Body of pancreas (tissue), 4 donors: ENCODE measurements at regions of chr16 and their contacts with region 1.

Region 1: DNA sequence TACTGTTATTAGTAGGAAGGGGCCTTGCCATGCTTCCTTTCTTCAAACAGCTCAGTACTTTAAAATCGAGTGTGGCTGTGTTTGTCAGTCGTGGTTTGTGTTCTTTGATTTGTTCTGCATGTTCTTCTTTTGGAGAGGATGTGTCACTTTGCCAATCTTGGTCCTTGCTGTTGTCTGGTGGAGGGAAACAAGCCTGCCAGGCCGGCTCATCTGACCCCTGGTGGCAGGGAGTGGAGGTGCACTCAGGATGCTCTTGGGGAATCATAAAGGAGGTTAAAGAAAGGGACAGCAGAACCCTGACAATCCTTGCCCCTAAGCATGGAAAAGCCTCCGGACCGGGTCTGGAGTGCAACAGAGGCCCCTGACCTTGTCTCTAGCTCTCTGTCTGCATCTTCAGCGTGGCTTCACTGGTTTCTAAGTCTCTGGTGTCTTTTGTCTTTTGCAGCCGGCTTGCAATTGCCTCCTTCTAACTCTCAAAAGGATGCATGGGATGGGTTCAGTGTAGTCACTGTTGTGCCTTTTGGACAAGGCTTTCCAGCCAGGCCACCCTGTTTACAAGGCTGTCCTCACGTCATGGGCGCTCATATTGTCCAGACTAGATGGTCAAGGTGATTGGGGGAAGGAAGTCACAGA is 135.8 kb downstream of the WWOX start:
- DNase-seq: peak; percentile 59 to 70 (median 66)
- ATAC-seq: peak; percentile 65
- H3K4me3 ChIP-seq: no peak overlapping the region
- H3K27ac ChIP-seq: no peak overlapping the region
- H3K4me1 ChIP-seq: peaks cover 7% of the 10 kb centered on the region
- H3K27me3 ChIP-seq: no peaks in the 10 kb centered on the region
- CTCF ChIP-seq: peak; percentile 71 to 94 (median 84)
- POLR2A ChIP-seq: no peak

Region 2: DNA sequence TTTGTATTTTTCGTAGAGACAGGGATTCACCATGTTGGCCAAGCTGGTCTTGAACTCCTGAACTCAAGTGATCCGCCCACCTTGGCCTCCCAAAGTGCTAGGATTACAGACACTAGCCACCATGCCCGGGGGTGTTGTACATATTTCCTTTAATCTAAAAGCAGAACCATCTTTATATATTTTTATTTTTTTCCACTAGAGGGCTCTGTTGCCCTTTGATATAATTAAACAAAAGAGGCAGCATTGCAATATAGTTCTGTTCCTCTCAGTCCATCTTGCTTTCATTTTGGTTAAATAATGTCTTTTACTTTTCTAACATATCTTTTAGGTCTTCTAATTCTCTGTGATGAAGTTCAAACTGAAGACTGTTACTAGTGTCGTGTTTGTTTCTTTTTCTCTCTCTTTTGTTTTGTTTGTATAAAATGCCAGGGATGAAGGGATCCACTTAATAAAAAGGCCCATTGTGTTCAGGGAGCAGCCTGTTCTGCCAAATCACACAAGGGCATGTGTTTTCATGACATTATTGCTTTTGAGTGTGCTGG is 112.4 kb before region 1 on chr16:
- intact Hi-C with region 1: loop called (anchors 10 kb)
- DNase-seq: peak in 2 of 4 donors; percentile 22 to 24
- ATAC-seq: peak; percentile 76
- H3K4me3 ChIP-seq: no peak overlapping the region
- H3K27ac ChIP-seq: peak overlapping the region in 3 of 4 donors; percentile 20 to 70 (median 32)
- H3K4me1 ChIP-seq: no peaks in the 10 kb centered on the region
- H3K27me3 ChIP-seq: no peaks in the 10 kb centered on the region
- CTCF ChIP-seq: peak in 6 of 7 experiments; percentile 42 to 68 (median 62)
- POLR2A ChIP-seq: no peak